ENCODE measurements at regions of chr5 and their contacts with region 1.

Region 1: GRCh38 chr5:175689147-175689991 is 31.5 kb downstream of the HRH2 start:
- DNase-seq: peak; percentile 70
- ATAC-seq: peak in 1 of 2 donors; percentile 71

Region 2: DNA sequence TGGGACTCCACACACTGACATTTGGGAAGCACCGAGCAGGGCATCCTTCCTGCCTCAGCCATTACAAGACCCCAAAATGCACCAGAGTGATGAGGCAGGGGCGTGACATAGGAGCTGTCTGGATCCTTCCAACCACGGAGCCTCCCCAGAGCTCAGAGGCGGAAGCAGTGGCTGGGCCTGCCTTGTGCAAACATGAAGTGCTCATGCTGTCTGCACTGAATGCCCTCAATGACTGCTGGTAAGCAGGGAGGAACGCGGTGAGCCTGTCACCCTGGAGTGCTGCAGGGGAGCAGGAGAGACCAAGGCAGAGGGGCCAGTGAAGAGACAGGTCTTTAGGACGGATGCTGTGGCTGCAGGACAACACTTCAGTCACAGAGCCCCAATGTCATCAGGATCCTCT is 91.7 kb before region 1 on chr5:
- intact Hi-C with region 1: loop called in 1 of 2 experiments (anchors 5 kb)
- DNase-seq: no peak
- ATAC-seq: peak in 1 of 2 donors; percentile 13

Region 3: DNA sequence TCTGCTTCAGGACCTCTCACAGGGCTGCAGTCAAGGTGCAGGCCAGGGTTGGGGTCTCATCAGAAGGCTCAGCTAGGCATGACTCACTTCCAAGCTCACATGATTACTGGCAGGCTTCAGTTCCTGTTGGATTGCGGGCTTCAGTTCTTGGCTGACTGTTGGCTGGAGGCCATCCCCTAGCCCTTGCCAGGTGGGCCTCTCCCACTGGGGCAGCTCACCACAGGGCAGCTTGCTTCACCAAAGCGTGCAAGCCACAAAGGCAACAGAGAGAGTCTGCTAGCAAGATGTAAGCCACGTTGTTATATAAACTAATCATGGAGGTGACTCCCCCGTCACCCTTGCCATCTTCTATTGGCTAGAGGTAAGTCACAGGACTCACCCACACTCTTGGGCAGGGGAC is 196.4 kb after region 1 on chr5:
- intact Hi-C with region 1: no loop called
- DNase-seq: no peak
- ATAC-seq: no peak